CD8-positive, alpha-beta memory T cell (primary cell): ENCODE measurements at regions of chr9 and their contacts with region 1.

Region 1: DNA sequence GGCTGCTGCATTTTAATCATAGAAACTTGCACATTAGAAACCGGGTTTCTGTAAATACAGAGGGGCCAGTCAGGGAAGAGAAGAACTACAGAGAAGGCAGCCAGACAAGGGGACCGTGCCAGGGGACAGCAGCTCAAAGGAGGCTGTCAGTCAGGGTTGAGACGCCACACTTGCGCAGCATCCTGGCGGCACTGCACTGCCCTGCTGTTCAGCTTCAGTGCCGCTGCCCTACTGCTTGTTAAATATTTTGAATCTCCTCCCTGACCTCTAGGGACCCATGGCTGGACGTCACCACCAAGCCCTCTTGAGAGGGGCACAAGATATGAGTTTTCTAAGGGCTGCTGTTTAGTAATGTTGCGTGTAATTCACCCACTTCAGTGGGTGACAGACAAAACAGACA is 43.6 kb upstream of the ZBTB43 start:
- DNase-seq: no peak
- H3K4me3 ChIP-seq: no peak overlapping the region
- H3K4me3 Mint-ChIP-seq: no peak overlapping the region
- H3K27ac ChIP-seq: no peak overlapping the region
- H3K27ac Mint-ChIP-seq: no peak overlapping the region
- H3K4me1 ChIP-seq: no peaks in the 10 kb centered on the region
- H3K4me1 Mint-ChIP-seq: no peaks in the 10 kb centered on the region
- H3K27me3 ChIP-seq: no peaks in the 10 kb centered on the region
- H3K27me3 Mint-ChIP-seq: peaks cover 10 to 14% of the 10 kb centered on the region in 2 donors

Region 2: GRCh38 chr9:126781186-126782052 is 20.1 kb after region 1 on chr9:
- CTCF ChIA-PET with region 1: interaction called, 12 read pairs
- POLR2A ChIA-PET with region 1: interaction called, 3 read pairs
- DNase-seq: peak; percentile 63 to 86 (median 77)
- H3K4me3 ChIP-seq: no peak overlapping the region
- H3K4me3 Mint-ChIP-seq: no peak overlapping the region
- H3K27ac ChIP-seq: no peak overlapping the region
- H3K27ac Mint-ChIP-seq: peak overlapping the region in 1 of 8 donors; percentile 54
- H3K4me1 ChIP-seq: no peaks in the 10 kb centered on the region
- H3K4me1 Mint-ChIP-seq: no peaks in the 10 kb centered on the region
- H3K27me3 ChIP-seq: peaks cover 7% of the 10 kb centered on the region
- H3K27me3 Mint-ChIP-seq: peaks cover 17 to 42% of the 10 kb centered on the region in 2 donors

Region 3: DNA sequence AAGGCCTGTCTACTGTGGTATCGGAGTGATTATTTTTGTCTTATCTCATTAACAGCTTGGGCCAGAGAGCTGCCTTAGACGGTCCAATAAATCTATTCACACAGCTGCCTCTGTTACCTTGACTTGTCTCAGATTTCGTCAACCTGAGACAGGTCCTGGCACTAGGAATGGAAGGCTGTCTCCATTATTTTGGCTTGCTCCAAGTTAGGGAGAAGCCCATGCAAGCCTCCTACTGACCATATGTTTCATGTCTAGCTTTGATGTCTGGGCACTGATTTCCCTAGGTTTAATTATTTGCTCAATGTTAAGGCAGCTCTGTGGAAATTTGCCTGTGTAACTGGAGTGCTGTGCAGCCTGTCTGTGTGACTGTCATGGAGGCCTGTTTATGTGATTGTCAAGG is 140.9 kb after region 1 on chr9:
- CTCF ChIA-PET with region 1: no interaction called
- POLR2A ChIA-PET with region 1: no interaction called
- DNase-seq: no peak
- H3K4me3 ChIP-seq: no peak overlapping the region
- H3K4me3 Mint-ChIP-seq: no peak overlapping the region
- H3K27ac ChIP-seq: no peak overlapping the region
- H3K27ac Mint-ChIP-seq: no peak overlapping the region
- H3K4me1 ChIP-seq: no peaks in the 10 kb centered on the region
- H3K4me1 Mint-ChIP-seq: no peaks in the 10 kb centered on the region
- H3K27me3 ChIP-seq: no peaks in the 10 kb centered on the region
- H3K27me3 Mint-ChIP-seq: peaks cover 7 to 17% of the 10 kb centered on the region in 2 donors